ENCODE measurements at regions of chr12 and their contacts with region 1.

Region 1: DNA sequence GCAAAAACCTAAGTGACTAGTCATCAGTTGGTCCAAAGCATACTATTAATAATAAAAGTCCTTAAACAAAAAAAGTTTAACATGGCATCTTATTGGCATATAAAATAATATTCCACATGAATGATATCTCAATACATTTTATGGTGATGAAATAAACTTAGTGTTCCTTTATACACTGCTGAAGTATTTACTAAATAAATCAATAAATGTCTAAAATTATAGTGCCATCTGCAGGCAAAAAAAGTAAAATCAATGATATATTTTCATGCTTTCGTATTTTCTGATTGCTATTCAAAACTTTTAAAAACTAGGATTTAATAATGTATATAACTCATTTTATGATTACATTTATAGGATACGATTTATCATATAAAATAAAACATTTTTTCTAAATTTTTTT is 30.5 kb downstream of the PUS7L start:
- DNase-seq: no peak
- ATAC-seq: no peak
- H3K4me3 ChIP-seq: no peak overlapping the region
- H3K27ac ChIP-seq: no peak overlapping the region
- H3K4me1 ChIP-seq: no peaks in the 10 kb centered on the region
- H3K27me3 ChIP-seq: no peaks in the 10 kb centered on the region
- CTCF ChIP-seq: peak in 8 of 12 donors; percentile 8 to 37 (median 25)
- POLR2A ChIP-seq: no peak

Region 2: GRCh38 chr12:43444940-43445564 is 283.1 kb before region 1 on chr12:
- intact Hi-C with region 1: loop called in 4 of 10 experiments (anchors 5 to 10 kb)
- DNase-seq: peak in 2 of 5 donors; percentile 14 to 28
- ATAC-seq: no peak
- H3K4me3 ChIP-seq: no peak overlapping the region
- H3K27ac ChIP-seq: no peak overlapping the region
- H3K4me1 ChIP-seq: no peaks in the 10 kb centered on the region
- H3K27me3 ChIP-seq: no peaks in the 10 kb centered on the region
- CTCF ChIP-seq: peak; percentile 52 to 75 (median 66)
- POLR2A ChIP-seq: no peak

Region 3: GRCh38 chr12:43501703-43502102 is 226.4 kb before region 1 on chr12:
- intact Hi-C with region 1: loop called in 1 of 10 experiments (anchors 10 kb)
- DNase-seq: no peak
- ATAC-seq: no peak
- H3K4me3 ChIP-seq: no peak overlapping the region
- H3K27ac ChIP-seq: no peak overlapping the region
- H3K4me1 ChIP-seq: no peaks in the 10 kb centered on the region
- H3K27me3 ChIP-seq: no peaks in the 10 kb centered on the region
- CTCF ChIP-seq: peak in 6 of 12 donors; percentile 17 to 31 (median 24)
- POLR2A ChIP-seq: no peak

Region 4: GRCh38 chr12:44358636-44359035 is 630.5 kb after region 1 on chr12:
- intact Hi-C with region 1: no loop called
- DNase-seq: no peak
- ATAC-seq: no peak
- H3K4me3 ChIP-seq: no peak overlapping the region
- H3K27ac ChIP-seq: no peak overlapping the region
- H3K4me1 ChIP-seq: no peaks in the 10 kb centered on the region
- H3K27me3 ChIP-seq: no peaks in the 10 kb centered on the region
- CTCF ChIP-seq: no peak
- POLR2A ChIP-seq: no peak